ENCODE measurements at regions of chr20 and their contacts with region 1.

Region 1: GRCh38 chr20:22339091-22339881 is 245.1 kb downstream of the FOXA2 start:
- DNase-seq: peak; percentile 78
- H3K4me3 ChIP-seq: no peak overlapping the region
- H3K27ac ChIP-seq: no peak overlapping the region
- H3K4me1 ChIP-seq: no peaks in the 10 kb centered on the region
- H3K27me3 ChIP-seq: no peaks in the 10 kb centered on the region
- CTCF ChIP-seq: peak; percentile 66

Region 2: GRCh38 chr20:22303523-22303922 is 35.8 kb before region 1 on chr20:
- intact Hi-C with region 1: no loop called
- DNase-seq: no peak
- H3K4me3 ChIP-seq: no peak overlapping the region
- H3K27ac ChIP-seq: no peak overlapping the region
- H3K4me1 ChIP-seq: no peaks in the 10 kb centered on the region
- H3K27me3 ChIP-seq: no peaks in the 10 kb centered on the region
- CTCF ChIP-seq: no peak

Region 3: GRCh38 chr20:22385602-22386305 is 46.5 kb after region 1 on chr20:
- intact Hi-C with region 1: loop called (anchors 5 kb)
- DNase-seq: no peak
- H3K4me3 ChIP-seq: no peak overlapping the region
- H3K27ac ChIP-seq: no peak overlapping the region
- H3K4me1 ChIP-seq: no peaks in the 10 kb centered on the region
- H3K27me3 ChIP-seq: no peaks in the 10 kb centered on the region
- CTCF ChIP-seq: no peak

Region 4: DNA sequence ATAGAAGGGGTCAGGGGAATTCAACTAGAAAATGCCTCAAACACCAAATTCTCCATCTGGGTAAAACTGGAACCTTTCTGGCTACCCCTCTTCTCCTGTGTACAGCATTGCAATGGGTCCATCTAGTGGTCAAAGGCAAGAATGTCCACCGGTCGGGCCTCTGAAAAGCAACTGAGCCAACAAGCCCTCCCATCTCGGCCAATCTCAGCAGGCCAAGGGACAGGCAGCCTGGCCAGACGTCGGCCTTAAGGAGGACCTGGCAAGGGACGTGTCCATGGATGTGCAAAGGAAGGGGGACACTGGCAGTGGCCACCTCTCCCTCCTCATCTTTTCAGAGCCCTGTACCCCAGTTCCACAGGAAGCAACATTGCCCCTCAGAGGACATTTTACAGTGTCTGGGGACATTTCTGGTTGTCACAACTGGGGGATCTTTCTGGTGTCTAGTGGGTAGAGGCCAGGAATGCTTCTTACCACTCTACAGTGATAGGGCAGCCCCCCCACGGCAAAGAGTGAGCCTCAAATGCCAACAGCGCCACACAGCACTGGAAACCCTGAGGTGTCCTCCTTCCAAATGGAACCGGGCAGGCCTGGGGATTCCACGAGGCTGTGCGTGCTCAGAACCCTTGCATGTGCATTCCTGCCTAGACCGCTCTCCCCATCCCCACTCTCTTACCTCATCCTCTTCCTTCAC is 344.9 kb after region 1 on chr20:
- intact Hi-C with region 1: loop called (anchors 2 kb)
- DNase-seq: peak; percentile 67
- H3K4me3 ChIP-seq: no peak overlapping the region
- H3K27ac ChIP-seq: no peak overlapping the region
- H3K4me1 ChIP-seq: no peaks in the 10 kb centered on the region
- H3K27me3 ChIP-seq: no peaks in the 10 kb centered on the region
- CTCF ChIP-seq: peak; percentile 65

Region 5: DNA sequence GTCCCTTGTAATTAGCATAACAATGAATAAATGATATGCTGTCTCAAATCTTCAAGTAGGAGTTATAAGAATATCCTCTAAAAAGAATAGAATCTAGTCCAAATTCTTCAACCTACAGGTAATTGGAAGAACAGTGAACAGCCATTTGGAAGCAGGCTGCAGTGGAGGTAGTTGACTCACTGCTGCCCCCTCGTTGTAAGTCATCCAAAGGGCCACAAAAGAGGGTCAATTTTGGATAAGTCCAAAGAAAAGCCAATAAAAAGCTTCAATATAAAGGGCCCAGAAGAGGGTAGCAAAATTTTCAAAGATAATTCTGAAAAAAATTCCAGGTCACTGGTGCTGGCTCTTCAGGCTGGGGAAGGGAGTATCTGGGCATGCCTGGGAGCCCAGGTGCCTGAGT is 635.1 kb after region 1 on chr20:
- intact Hi-C with region 1: loop called (anchors 5 kb)
- DNase-seq: no peak
- H3K4me3 ChIP-seq: no peak overlapping the region
- H3K27ac ChIP-seq: no peak overlapping the region
- H3K4me1 ChIP-seq: no peaks in the 10 kb centered on the region
- H3K27me3 ChIP-seq: no peaks in the 10 kb centered on the region
- CTCF ChIP-seq: peak; percentile 14

Measured in colonic mucosa (tissue), 4 donors.